CD8-positive, alpha-beta T cell (primary cell): ENCODE measurements at regions of chr6 and their contacts with region 1.

Region 1: GRCh38 chr6:8063761-8064637 is at the start of gene BLOC1S5:
- DNase-seq: peak; percentile 91 to 98 (median 95)
- ATAC-seq: peak; percentile 92
- H3K4me3 ChIP-seq: peak within 1 kb of the TSS; percentile 82 to 89
- H3K4me3 Mint-ChIP-seq: peak within 1 kb of the TSS; percentile 95
- H3K27ac ChIP-seq: peak within 1 kb of the TSS; percentile 84 to 87
- H3K27ac Mint-ChIP-seq: peak within 1 kb of the TSS; percentile 98
- H3K4me1 ChIP-seq: peaks cover 13% of the 10 kb centered on the region
- H3K4me1 Mint-ChIP-seq: peaks cover 27% of the 10 kb centered on the region
- H3K27me3 ChIP-seq: no peaks in the 10 kb centered on the region
- H3K27me3 Mint-ChIP-seq: peaks cover 2% of the 10 kb centered on the region
- CTCF ChIP-seq: no peak
- total RNA-seq, gene BLOC1S5: 6.3 to 8.9 TPM

Region 2: GRCh38 chr6:7312616-7313504 is 751.1 kb before region 1 on chr6 and contains the start of gene SSR1:
- CTCF ChIA-PET with region 1: no interaction called
- POLR2A ChIA-PET with region 1: no interaction called
- intact Hi-C with region 1: loop called in 1 of 2 experiments (anchors 2 kb)
- DNase-seq: peak; percentile 84 to 97 (median 93)
- ATAC-seq: peak; percentile 94
- H3K4me3 ChIP-seq: peak within 1 kb of the TSS; percentile 76 to 98
- H3K4me3 Mint-ChIP-seq: peak within 1 kb of the TSS; percentile 88
- H3K27ac ChIP-seq: peak within 1 kb of the TSS; percentile 71 to 84
- H3K27ac Mint-ChIP-seq: peak within 1 kb of the TSS; percentile 91
- H3K4me1 ChIP-seq: peaks cover 34% of the 10 kb centered on the region
- H3K4me1 Mint-ChIP-seq: peaks cover 53% of the 10 kb centered on the region
- H3K27me3 ChIP-seq: no peaks in the 10 kb centered on the region
- H3K27me3 Mint-ChIP-seq: no peaks in the 10 kb centered on the region
- CTCF ChIP-seq: no peak
- total RNA-seq, gene SSR1: 40.5 to 42.5 TPM

Region 3: DNA sequence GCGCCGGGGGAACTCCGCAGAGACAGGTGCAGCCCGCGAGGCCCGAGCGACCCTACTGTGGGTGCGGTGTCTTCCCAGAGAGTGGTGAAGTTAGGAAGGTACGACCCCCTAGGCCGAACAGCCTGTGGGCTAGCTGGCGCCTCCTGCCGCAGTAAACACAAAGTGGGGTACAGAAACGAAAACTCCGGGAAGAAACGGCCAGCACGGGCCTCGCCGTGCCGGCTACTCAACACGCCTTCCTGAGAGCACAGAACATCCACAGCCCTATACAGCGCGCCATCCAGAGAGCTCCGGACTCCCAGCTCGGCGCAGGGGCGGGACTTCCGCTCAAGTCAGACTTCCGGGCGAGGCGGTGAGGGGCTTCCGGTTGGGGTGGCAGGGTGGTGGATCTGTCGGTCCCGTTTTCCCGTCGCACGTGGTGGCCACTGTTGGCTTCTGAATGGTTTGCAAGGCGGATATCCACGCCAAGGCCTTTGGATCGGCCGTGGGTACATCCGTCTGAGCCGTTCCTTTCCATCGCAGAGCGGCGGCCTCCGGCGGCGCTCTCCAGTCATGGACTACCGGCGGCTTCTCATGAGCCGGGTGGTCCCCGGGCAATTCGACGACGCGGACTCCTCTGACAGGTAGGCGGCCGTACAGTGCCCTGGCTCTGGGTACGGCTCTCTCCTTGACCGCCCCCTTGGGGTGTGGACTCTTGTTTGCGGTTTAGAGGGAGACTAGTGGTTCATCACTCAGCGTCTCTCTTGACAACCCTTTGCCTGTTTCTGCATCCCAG is 674.4 kb before region 1 on chr6 and contains the starts of genes CAGE1 and RIOK1:
- CTCF ChIA-PET with region 1: no interaction called
- POLR2A ChIA-PET with region 1: no interaction called
- intact Hi-C with region 1: loop called (anchors 1 to 2 kb)
- DNase-seq: peak; percentile 85 to 97 (median 95)
- ATAC-seq: peak; percentile 89
- H3K4me3 ChIP-seq: peak within 1 kb of the TSS; percentile 77 to 91
- H3K4me3 Mint-ChIP-seq: peak within 1 kb of the TSS; percentile 98
- H3K27ac ChIP-seq: peak within 1 kb of the TSS; percentile 90 to 97
- H3K27ac Mint-ChIP-seq: peak within 1 kb of the TSS; percentile 100
- H3K4me1 ChIP-seq: peaks cover 29% of the 10 kb centered on the region
- H3K4me1 Mint-ChIP-seq: peaks cover 49% of the 10 kb centered on the region
- H3K27me3 ChIP-seq: no peaks in the 10 kb centered on the region
- H3K27me3 Mint-ChIP-seq: no peaks in the 10 kb centered on the region
- CTCF ChIP-seq: no peak
- total RNA-seq, gene CAGE1: 0.33 to 0.49 TPM
- total RNA-seq, gene RIOK1: 47.3 to 56.3 TPM

Region 4: DNA sequence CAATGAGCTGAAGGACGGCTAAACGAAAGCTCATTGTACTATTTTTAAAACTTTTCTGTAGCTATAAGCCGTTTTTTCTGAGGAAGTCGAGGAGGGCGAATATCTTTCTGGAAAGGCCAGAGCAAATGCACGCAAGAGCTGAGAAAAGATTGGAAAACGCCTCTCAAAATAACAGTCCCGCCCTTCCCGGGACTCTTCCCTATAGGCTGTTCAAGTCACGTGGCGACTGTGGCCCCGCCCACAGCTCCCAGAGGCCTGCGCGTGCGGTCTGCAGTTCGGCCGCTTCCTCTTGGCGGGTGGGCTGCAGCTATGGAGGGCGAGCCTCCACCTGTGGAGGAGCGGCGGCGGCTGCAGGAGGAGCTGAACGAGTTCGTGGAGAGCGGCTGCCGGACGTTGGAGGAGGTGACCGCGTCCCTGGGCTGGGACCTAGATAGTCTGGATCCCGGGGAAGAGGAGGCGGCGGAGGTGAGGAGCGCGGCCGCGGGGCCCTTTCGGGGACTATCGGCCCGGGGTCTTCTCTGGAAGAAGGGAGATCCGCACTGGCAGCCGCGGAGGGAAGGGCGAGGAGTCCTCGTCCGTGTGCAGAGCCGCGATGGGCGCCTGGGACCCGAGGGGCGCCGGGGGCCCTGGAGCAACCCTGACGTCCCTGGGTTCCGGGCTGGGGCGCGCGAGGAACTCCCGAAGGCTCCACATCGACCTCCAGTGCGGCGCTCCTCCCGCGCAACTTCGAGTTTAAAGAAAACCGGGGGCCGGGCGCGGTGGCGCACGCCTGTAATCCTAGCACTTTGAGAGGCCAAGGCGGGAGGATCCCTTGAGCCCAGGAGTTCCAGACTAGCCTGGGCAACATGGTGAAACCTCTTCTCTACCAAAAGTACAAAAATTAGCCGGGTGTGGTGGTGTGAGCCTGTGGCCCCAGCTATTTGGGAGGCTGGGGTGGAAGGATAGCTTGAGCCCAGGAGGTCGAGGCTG is 473.8 kb before region 1 on chr6 and contains the start of gene SNRNP48:
- CTCF ChIA-PET with region 1: no interaction called
- POLR2A ChIA-PET with region 1: no interaction called
- intact Hi-C with region 1: loop called (anchors 2 to 5 kb)
- DNase-seq: peak; percentile 80 to 94 (median 90)
- ATAC-seq: peak; percentile 97
- H3K4me3 ChIP-seq: peak within 1 kb of the TSS; percentile 76 to 92
- H3K4me3 Mint-ChIP-seq: peak within 1 kb of the TSS; percentile 100
- H3K27ac ChIP-seq: peak within 1 kb of the TSS; percentile 58 to 61
- H3K27ac Mint-ChIP-seq: peak within 1 kb of the TSS; percentile 95
- H3K4me1 ChIP-seq: peaks cover 25% of the 10 kb centered on the region
- H3K4me1 Mint-ChIP-seq: peaks cover 47% of the 10 kb centered on the region
- H3K27me3 ChIP-seq: no peaks in the 10 kb centered on the region
- H3K27me3 Mint-ChIP-seq: no peaks in the 10 kb centered on the region
- CTCF ChIP-seq: no peak
- total RNA-seq, gene SNRNP48: 12.2 to 12.9 TPM

Region 5: DNA sequence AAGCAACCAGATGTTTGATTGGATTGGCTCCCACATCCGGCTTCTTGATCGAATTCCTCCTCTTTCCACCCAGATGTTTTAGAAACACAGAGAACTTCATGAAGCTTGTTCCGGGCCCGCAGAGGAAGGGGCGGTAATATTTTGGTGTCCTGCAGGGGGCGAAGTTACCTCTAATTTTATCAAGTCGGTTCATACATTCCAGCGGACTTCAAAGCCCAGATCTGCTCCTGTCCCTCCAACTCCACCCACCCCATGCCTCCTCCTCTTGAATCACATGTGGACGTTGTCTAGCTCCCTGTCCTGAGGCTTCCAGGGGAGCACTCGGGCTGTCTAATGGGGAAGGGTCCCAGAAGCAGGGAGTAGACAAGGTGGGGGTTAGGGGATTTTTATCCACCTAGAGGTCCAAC is 341.0 kb before region 1 on chr6:
- CTCF ChIA-PET with region 1: interaction called, 11 read pairs
- POLR2A ChIA-PET with region 1: no interaction called
- intact Hi-C with region 1: loop called in 1 of 2 experiments (anchors 2 kb)
- DNase-seq: peak; percentile 13 to 61 (median 48)
- ATAC-seq: peak; percentile 36
- H3K4me3 ChIP-seq: no peak overlapping the region
- H3K4me3 Mint-ChIP-seq: no peak overlapping the region
- H3K27ac ChIP-seq: no peak overlapping the region
- H3K27ac Mint-ChIP-seq: no peak overlapping the region
- H3K4me1 ChIP-seq: peaks cover 4% of the 10 kb centered on the region
- H3K4me1 Mint-ChIP-seq: peaks cover 12% of the 10 kb centered on the region
- H3K27me3 ChIP-seq: peaks cover 8 to 15% of the 10 kb centered on the region in 2 experiments
- H3K27me3 Mint-ChIP-seq: peaks cover 55% of the 10 kb centered on the region
- CTCF ChIP-seq: peak; percentile 57

Region 6: GRCh38 chr6:7769702-7770101 is 294.3 kb before region 1 on chr6:
- CTCF ChIA-PET with region 1: no interaction called
- POLR2A ChIA-PET with region 1: no interaction called
- intact Hi-C with region 1: no loop called
- DNase-seq: no peak
- ATAC-seq: no peak
- H3K4me3 ChIP-seq: no peak overlapping the region
- H3K4me3 Mint-ChIP-seq: no peak overlapping the region
- H3K27ac ChIP-seq: no peak overlapping the region
- H3K27ac Mint-ChIP-seq: no peak overlapping the region
- H3K4me1 ChIP-seq: no peaks in the 10 kb centered on the region
- H3K4me1 Mint-ChIP-seq: no peaks in the 10 kb centered on the region
- H3K27me3 ChIP-seq: no peaks in the 10 kb centered on the region
- H3K27me3 Mint-ChIP-seq: peaks cover 17% of the 10 kb centered on the region
- CTCF ChIP-seq: no peak

Region 7: GRCh38 chr6:7910654-7911344 is 153.2 kb before region 1 on chr6 and contains the start of gene TXNDC5:
- CTCF ChIA-PET with region 1: no interaction called
- POLR2A ChIA-PET with region 1: interaction called, 7 read pairs
- intact Hi-C with region 1: loop called (anchors 2 to 5 kb)
- DNase-seq: peak; percentile 38 to 81 (median 66)
- ATAC-seq: peak; percentile 87
- H3K4me3 ChIP-seq: peak within 1 kb of the TSS; percentile 69 to 75
- H3K4me3 Mint-ChIP-seq: peak within 1 kb of the TSS; percentile 77
- H3K27ac ChIP-seq: no peak within 1 kb of the TSS
- H3K27ac Mint-ChIP-seq: no peak within 1 kb of the TSS
- H3K4me1 ChIP-seq: peaks cover 15% of the 10 kb centered on the region
- H3K4me1 Mint-ChIP-seq: peaks cover 8% of the 10 kb centered on the region
- H3K27me3 ChIP-seq: no peaks in the 10 kb centered on the region
- H3K27me3 Mint-ChIP-seq: peaks cover 2% of the 10 kb centered on the region
- CTCF ChIP-seq: no peak
- total RNA-seq, gene TXNDC5: 5.8 to 7.6 TPM

Region 8: DNA sequence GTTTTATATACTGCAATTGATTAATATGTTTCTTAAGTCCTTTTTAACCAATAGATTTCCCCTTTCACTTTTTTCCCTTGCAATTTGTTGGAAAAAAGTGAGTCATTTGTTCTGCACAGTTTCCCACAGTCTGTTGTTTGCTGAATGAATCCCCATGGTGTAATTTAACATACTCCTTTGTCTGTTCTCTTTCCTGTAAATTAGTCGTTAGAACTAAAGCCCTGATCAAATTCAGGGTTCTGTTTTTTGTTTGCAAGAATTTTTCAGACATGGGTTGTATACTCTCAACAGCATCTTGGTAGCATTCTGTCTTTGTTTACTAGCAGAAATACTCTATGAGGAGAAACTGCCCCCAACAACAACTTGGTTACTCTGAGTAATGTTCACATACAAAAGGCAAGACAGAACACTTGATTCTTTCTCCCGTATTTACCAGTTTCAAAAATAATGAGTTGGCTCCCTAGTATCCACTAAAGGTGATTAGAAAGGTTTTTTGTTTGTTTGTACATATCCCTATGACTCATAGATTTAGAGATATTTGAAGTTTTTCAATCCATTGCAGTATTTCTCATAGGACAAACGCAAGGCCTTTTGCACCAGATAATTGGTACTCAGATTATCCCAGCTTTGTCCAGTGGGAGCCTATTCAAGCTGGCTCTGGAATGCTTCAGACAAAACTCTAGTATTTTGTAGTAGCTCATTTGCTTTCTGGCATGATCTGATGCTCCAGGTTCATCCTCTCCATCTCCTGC is 16.3 kb before region 1 on chr6:
- CTCF ChIA-PET with region 1: no interaction called
- POLR2A ChIA-PET with region 1: no interaction called
- intact Hi-C with region 1: no loop called
- DNase-seq: no peak
- ATAC-seq: no peak
- H3K4me3 ChIP-seq: no peak overlapping the region
- H3K4me3 Mint-ChIP-seq: no peak overlapping the region
- H3K27ac ChIP-seq: no peak overlapping the region
- H3K27ac Mint-ChIP-seq: no peak overlapping the region
- H3K4me1 ChIP-seq: no peaks in the 10 kb centered on the region
- H3K4me1 Mint-ChIP-seq: peaks cover 4% of the 10 kb centered on the region
- H3K27me3 ChIP-seq: no peaks in the 10 kb centered on the region
- H3K27me3 Mint-ChIP-seq: no peaks in the 10 kb centered on the region
- CTCF ChIP-seq: no peak

Region 9: DNA sequence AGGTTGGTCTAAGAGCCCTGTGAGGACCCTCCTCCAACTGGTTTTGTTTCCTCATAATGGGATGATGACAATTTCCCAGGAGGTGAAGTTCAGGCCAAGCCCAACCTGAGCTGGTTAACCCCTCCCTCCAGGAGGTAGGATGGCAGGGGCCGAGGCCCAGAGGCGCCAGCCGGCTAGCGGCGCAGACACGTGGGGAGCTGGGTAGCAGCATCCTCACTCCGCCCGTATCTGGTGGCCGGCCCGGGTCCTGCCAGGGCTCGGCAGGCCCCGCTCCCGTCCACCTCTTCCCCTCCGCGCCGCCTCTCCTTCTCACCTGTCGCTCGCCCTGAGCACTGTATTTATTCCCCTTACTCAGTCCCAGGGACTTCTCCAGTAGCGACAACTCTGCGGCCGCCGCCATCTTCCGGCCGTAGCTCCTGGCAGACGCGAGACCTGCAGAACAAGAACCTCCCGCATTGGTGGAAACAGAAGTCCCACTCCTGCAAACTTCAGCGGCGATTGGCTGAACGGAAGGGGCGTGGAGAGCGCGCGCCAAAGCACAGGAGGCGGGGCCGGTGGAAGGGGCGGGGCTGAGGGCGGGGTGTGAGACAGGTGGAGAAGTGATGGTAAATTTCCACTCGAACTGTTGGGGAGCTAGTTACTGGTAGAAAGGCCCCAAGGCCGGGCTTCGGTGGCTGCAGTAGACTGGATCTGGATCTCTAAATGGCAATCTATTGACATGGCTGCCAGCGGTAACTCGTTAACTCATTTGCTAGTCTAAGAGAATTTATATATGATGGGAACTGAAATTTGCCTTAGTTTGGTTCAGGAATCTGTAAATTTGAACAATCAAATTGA is 38.3 kb after region 1 on chr6 and contains the start of gene EEF1E1:
- CTCF ChIA-PET with region 1: interaction called, 3 read pairs
- POLR2A ChIA-PET with region 1: interaction called, 20 read pairs
- intact Hi-C with region 1: loop called (anchors 1 kb)
- DNase-seq: peak; percentile 96 to 98 (median 97)
- ATAC-seq: peak; percentile 97
- H3K4me3 ChIP-seq: peak within 1 kb of the TSS; percentile 81 to 92
- H3K4me3 Mint-ChIP-seq: peak within 1 kb of the TSS; percentile 99
- H3K27ac ChIP-seq: peak within 1 kb of the TSS; percentile 75 to 79
- H3K27ac Mint-ChIP-seq: peak within 1 kb of the TSS; percentile 98
- H3K4me1 ChIP-seq: peaks cover 12% of the 10 kb centered on the region
- H3K4me1 Mint-ChIP-seq: peaks cover 33% of the 10 kb centered on the region
- H3K27me3 ChIP-seq: no peaks in the 10 kb centered on the region
- H3K27me3 Mint-ChIP-seq: peaks cover 14% of the 10 kb centered on the region
- CTCF ChIP-seq: no peak
- total RNA-seq, gene EEF1E1: 19.9 to 20.7 TPM

Region 10: GRCh38 chr6:8803181-8803760 is 739.3 kb after region 1 on chr6:
- CTCF ChIA-PET with region 1: no interaction called
- POLR2A ChIA-PET with region 1: no interaction called
- intact Hi-C with region 1: no loop called
- DNase-seq: no peak
- ATAC-seq: no peak
- H3K4me3 ChIP-seq: no peak overlapping the region
- H3K4me3 Mint-ChIP-seq: no peak overlapping the region
- H3K27ac ChIP-seq: no peak overlapping the region
- H3K27ac Mint-ChIP-seq: no peak overlapping the region
- H3K4me1 ChIP-seq: no peaks in the 10 kb centered on the region
- H3K4me1 Mint-ChIP-seq: no peaks in the 10 kb centered on the region
- H3K27me3 ChIP-seq: no peaks in the 10 kb centered on the region
- H3K27me3 Mint-ChIP-seq: no peaks in the 10 kb centered on the region
- CTCF ChIP-seq: no peak